ENCODE measurements at regions of chr16 and their contacts with region 1.

Region 1: DNA sequence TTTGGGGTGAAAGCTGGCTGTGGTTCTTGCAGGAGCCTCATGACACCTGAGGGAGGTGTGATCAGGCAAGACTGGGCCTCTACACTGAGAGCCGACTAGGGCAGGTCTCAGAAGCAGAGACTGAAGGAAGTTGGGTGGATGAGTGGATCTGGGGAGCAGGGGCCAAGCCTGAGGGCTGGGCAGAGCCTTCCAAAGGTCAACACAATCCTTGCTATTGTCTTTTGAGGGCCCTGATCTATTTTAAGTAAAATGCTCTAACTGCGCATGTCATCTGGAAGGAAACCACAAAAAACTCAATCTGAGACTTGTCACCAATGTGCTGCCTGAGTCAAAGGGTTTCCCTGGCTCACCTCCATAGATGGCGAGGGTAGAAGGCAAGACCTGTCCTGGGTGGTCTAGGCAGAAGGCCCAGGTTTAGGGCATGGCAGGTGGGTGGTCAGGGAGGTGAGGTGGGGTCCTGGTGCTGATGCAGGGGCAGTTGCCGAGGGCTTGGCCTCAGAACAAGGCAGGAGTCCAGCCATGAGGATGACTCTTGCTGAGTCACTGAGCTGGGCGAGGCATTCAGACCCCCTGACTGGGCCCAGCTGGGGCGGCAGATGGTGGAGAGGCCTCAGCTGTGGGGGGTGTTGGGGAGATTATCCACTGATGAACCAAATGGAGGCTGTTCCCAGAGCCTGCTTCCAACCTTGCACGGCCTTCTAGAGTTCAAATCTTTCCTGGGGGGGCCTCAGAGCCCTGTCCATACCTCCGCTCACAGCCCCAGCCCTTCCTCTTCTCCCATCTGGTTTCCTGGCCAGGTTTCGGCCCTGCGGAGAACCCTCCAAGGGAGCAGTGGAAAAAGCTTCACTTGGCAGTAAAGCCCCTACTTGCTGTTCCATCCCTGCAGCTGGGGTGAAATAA is 5.1 kb downstream of the MVP start:
- DNase-seq: no peak
- H3K4me3 ChIP-seq: no peak overlapping the region
- H3K27ac ChIP-seq: peak overlapping the region; percentile 60 to 64
- H3K4me1 ChIP-seq: peaks cover 7 to 69% (median 55%) of the 10 kb centered on the region in 4 donors
- H3K27me3 ChIP-seq: no peaks in the 10 kb centered on the region
- CTCF ChIP-seq: no peak

Region 2: DNA sequence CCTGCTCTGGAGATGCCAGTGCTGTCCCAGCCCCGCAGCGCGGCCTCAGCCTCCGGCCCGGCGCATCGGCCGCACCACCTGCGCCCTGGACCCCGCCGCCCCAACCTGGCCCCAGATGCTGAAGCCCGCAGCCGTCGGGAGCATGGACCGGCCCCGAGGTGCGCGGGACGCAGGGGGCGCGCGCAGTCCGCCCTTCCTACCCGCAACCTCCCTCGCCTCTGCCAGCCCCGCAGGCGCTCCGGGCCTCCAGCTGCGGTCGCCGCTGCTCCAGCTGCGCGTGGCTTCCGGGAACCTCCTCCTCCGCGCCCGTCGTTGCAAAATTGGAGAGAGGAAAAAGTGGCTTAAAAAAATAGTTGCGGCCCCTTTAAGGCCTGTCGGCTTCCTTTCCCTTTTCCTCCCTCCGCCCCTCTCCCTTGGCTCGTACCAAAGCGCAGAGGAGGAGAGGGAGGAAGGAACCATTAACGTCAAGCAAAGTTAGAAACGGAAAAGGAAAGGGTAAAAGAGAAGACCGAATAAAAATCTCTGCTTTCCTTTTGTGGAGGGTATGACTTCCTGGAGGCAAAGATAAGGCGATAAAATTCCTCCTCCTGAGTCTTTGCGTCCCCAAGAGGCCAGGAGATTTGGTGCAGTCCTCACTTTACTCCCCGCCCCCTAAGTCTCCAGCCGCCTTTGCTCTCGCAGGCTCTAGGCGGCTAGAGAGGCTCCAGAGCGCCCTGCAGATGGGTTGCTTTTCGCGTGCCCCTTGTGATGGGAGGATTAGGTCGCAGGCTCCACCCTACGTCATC is 37.7 kb after region 1 on chr16 and contains the start of gene CDIPT:
- intact Hi-C with region 1: loop called (anchors 5 kb)
- DNase-seq: peak; percentile 93 to 97
- H3K4me3 ChIP-seq: peak within 1 kb of the TSS; percentile 59 to 68
- H3K27ac ChIP-seq: peak within 1 kb of the TSS; percentile 74 to 89
- H3K4me1 ChIP-seq: peaks cover 0 to 33% (median 25%) of the 10 kb centered on the region in 4 donors
- H3K27me3 ChIP-seq: no peaks in the 10 kb centered on the region
- CTCF ChIP-seq: peak; percentile 45 to 80

Region 3: DNA sequence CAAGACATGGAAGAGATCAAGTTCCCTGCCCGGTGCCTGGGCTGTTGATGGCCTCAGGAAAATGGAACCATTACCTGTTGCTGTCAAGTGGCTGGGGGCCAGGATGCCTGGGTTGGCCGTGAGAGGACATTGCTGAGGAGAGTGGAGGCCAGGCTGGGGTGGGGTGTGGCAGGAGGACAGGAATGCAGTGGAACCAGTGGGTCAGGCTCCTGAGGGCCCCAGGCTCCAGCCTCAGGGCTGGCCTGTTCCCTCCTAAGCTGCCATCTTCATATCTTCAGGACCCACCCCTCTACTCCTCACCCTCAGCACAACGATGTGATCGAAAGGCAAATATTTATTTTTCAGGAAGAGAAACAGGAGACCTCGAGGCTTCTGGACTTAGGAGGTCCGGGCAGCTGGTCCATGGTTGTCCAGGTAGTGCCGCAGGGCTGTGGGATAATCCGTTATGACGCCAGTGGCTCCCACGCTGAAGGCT is 279.1 kb after region 1 on chr16:
- intact Hi-C with region 1: no loop called
- DNase-seq: no peak
- H3K4me3 ChIP-seq: no peak overlapping the region
- H3K27ac ChIP-seq: no peak overlapping the region
- H3K4me1 ChIP-seq: no peaks in the 10 kb centered on the region
- H3K27me3 ChIP-seq: no peaks in the 10 kb centered on the region
- CTCF ChIP-seq: no peak